Caco-2 (cell line): ENCODE measurements at regions of chr4 and their contacts with region 1.

Region 1: DNA sequence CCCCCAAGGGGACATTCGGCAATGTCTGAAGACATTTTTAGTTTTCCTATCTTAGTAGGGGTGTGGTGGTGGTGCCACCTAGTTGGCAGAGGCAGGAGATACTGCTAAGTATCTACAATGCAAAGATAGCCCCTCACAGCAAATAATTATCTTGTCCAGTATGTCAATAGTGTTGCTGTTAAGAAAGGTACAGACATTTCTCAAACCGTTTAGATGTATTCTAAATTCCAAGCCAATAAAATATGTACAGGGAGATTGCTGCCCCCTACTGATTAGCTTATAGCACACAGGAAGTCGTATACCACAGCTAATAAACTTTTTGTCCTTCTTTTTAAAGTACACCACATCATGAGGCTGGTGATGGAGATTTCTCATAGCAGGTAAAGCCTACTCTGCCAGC is 260.5 kb downstream of the TMA16 start:
- DNase-seq: no peak
- H3K4me3 ChIP-seq: no peak overlapping the region
- H3K4me3 Mint-ChIP-seq: no peak overlapping the region
- H3K27ac Mint-ChIP-seq: no peak overlapping the region
- H3K4me1 ChIP-seq: no peaks in the 10 kb centered on the region
- H3K4me1 Mint-ChIP-seq: no peaks in the 10 kb centered on the region
- H3K27me3 ChIP-seq: no peaks in the 10 kb centered on the region
- H3K27me3 Mint-ChIP-seq: no peaks in the 10 kb centered on the region
- CTCF ChIP-seq: peak in 1 of 2 experiments; percentile 27

Region 2: DNA sequence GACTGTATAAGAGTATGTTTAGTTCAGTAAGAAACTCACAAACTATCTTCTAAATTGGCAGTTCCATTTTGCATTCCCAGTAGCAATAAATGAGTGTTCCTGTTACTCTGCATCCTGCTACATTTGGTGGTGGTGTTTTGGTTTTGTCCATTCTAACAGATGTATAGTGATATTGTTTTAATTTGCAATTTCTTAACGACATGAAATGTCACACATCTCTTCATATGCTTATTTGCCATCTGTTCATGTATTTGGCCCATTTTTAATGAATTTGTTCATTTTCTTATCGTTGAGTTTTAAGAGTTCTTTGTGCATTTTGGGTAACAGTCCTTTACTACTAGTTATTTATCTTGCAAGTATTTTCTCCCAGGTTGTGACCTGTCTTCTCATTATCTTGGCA is 28.4 kb before region 1 on chr4:
- CTCF ChIA-PET with region 1: no interaction called
- POLR2A ChIA-PET with region 1: no interaction called
- intact Hi-C with region 1: no loop called
- DNase-seq: no peak
- H3K4me3 ChIP-seq: no peak overlapping the region
- H3K4me3 Mint-ChIP-seq: no peak overlapping the region
- H3K27ac Mint-ChIP-seq: no peak overlapping the region
- H3K4me1 ChIP-seq: no peaks in the 10 kb centered on the region
- H3K4me1 Mint-ChIP-seq: no peaks in the 10 kb centered on the region
- H3K27me3 ChIP-seq: no peaks in the 10 kb centered on the region
- H3K27me3 Mint-ChIP-seq: no peaks in the 10 kb centered on the region
- CTCF ChIP-seq: no peak

Region 3: GRCh38 chr4:164012396-164013027 is 257.5 kb after region 1 on chr4:
- CTCF ChIA-PET with region 1: no interaction called
- POLR2A ChIA-PET with region 1: no interaction called
- intact Hi-C with region 1: loop called (anchors 2 kb)
- DNase-seq: peak; percentile 40 to 57
- H3K4me3 ChIP-seq: no peak overlapping the region
- H3K4me3 Mint-ChIP-seq: no peak overlapping the region
- H3K27ac Mint-ChIP-seq: no peak overlapping the region
- H3K4me1 ChIP-seq: no peaks in the 10 kb centered on the region
- H3K4me1 Mint-ChIP-seq: no peaks in the 10 kb centered on the region
- H3K27me3 ChIP-seq: no peaks in the 10 kb centered on the region
- H3K27me3 Mint-ChIP-seq: no peaks in the 10 kb centered on the region
- CTCF ChIP-seq: peak; percentile 56 to 77